Activated CD4-positive, alpha-beta memory T cell treated with anti-CD3 and anti-CD28 coated beads, Interleukin-2, amount 10 ng/mL, durations not matched to agents 7 days and 5 days (primary cell): ENCODE measurements at regions of chr3 and their contacts with region 1.

Region 1: DNA sequence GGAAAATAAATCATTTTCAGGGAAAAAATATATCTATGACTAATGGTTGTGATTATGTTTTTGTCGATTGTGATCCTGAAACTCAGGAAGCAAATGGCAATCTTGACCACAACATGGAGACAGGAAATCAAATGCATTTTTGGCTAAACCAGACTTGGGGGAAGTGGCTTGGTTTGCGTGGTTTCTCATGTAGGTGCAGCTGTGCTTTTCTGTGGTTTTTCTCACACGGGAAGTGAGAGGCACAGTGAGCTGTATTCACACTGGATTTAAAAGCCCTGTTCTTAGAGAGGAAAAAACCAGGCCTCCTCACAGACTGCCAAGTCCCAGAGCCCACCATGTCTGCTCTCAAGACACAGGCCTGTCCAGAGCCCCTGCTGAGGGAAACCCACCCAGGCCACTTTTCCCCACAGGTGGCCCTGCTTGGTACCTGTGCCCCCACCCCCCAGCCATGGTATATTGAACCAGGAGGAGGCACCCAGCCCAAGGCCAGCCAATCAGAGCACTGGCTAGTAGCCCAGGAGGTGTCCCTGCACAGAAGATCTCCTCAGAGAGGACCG is 46.1 kb downstream of the BTD start:
- DNase-seq: peak; percentile 84
- H3K4me3 Mint-ChIP-seq: peak overlapping the region; percentile 19
- H3K27ac Mint-ChIP-seq: peak overlapping the region; percentile 73
- H3K4me1 Mint-ChIP-seq: peaks cover 47% of the 10 kb centered on the region
- H3K27me3 Mint-ChIP-seq: peaks cover 9% of the 10 kb centered on the region

Region 2: GRCh38 chr3:15458212-15458780 is 189.4 kb before region 1 on chr3:
- CTCF ChIA-PET with region 1: no interaction called
- POLR2A ChIA-PET with region 1: no interaction called
- DNase-seq: peak; percentile 3
- H3K4me3 Mint-ChIP-seq: no peak overlapping the region
- H3K27ac Mint-ChIP-seq: no peak overlapping the region
- H3K4me1 Mint-ChIP-seq: peaks cover 29% of the 10 kb centered on the region
- H3K27me3 Mint-ChIP-seq: no peaks in the 10 kb centered on the region

Region 3: DNA sequence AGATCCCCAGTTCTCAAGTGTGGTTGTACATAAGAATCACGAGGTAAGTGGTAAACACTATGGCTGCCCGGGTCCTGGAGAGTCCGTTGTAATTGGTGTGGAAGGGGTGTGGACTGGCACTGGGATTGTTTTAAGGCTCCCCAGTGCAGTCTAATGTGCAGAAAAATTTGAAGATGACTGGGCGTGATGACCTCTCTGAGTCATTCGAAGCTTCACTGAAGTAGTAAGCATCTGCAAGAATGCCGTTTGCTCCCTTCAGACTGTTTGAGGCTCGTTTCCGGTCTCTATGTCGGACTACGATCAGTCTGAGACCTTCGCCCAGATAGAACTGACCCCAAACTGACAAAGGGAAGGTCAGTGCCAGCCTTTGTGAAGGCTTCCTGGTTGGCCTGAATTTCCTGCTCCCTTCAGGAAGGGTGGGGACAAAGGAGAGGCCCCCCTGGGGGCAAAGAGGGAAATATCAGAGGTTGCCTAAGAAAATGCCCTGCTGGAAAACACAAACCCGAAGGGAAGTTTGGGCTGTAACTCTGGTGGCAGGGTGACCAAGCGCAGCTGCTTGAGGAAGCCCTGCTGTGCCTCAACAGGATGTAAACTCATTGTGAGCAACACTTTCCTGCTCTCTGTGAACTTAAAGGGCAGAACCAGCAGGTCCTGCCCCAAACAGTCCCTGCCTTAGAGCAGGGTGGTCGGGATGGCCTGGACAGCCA is 11.5 kb before region 1 on chr3:
- CTCF ChIA-PET with region 1: interaction called, 13 read pairs
- POLR2A ChIA-PET with region 1: interaction called, 30 read pairs
- DNase-seq: peak; percentile 56
- H3K4me3 Mint-ChIP-seq: peak overlapping the region; percentile 14
- H3K27ac Mint-ChIP-seq: peak overlapping the region; percentile 81
- H3K4me1 Mint-ChIP-seq: peaks cover 51% of the 10 kb centered on the region
- H3K27me3 Mint-ChIP-seq: no peaks in the 10 kb centered on the region